ENCODE measurements at regions of chr1 and their contacts with region 1.

Region 1: DNA sequence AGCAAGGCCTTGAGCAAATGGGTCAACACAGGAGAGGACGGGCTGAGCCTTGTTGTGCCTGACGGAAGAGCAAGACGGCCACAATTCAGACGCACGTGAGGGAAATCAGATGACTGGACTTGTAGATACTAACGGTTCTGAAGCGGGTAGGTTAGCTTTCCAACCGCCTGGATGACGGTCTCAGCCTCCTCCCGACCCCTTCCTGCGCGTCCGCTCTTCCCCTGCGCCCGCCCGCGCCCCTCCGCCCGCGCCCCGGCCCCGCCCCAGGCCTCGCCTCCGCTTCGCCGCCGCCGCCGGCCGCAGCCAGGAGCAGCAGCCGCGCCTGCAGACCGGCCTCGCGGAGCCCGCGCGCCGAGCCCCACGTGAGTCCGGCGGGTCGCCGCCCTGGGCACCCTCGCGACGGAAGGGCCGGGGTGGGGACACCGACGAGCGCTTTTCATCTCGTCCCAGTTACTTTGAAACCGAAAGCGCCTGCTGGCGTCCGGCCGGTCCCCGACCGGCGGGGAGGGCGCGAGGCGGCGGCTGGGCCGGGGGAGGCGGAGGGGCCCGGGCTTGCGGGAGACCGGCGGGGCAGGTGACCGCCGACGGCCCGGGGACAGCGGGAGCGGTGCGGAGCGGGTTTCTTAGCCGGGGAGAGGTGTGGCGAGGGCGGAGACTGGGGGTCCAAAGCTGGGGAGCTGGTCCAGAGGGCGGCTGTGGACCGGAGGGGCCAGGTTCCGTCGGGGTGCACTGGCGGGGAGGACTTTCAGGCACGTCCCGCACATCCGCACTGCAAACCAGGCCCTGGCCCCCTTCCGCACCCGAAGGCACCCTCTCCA is at the start of gene TRAF5:
- DNase-seq: no peak
- H3K4me3 ChIP-seq: peak within 1 kb of the TSS; percentile 54
- CTCF ChIP-seq: no peak

Region 2: GRCh38 chr1:211514030-211514754 is 187.5 kb after region 1 on chr1:
- in situ Hi-C with region 1: loop called (anchors 25 kb)
- DNase-seq: peak; percentile 72
- H3K4me3 ChIP-seq: no peak overlapping the region
- CTCF ChIP-seq: peak; percentile 82

Region 3: DNA sequence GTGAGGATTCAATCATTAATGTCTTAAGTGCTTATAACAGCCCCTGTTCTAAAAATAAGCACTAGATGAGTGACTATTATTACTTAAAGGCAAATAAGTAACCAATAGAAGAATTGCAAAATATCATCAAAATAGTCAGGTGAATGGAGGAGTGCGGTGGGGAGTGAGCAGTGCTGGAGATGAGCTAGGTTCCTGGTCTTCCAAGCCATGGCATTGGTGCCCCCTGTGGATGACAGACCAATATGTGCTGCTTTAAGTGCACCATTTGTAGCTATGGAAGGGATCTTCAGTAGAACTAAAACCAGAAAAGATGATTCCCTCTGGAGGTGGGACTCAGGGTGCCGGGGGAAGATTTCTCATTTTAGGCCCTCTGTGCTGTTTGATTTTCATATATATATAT is 298.3 kb after region 1 on chr1:
- in situ Hi-C with region 1: loop called (anchors 25 kb)
- DNase-seq: no peak
- H3K4me3 ChIP-seq: no peak overlapping the region
- CTCF ChIP-seq: no peak